Dorsolateral prefrontal cortex (tissue), 120 donors: ENCODE measurements at regions of chr21 and their contacts with region 1.

Region 1: DNA sequence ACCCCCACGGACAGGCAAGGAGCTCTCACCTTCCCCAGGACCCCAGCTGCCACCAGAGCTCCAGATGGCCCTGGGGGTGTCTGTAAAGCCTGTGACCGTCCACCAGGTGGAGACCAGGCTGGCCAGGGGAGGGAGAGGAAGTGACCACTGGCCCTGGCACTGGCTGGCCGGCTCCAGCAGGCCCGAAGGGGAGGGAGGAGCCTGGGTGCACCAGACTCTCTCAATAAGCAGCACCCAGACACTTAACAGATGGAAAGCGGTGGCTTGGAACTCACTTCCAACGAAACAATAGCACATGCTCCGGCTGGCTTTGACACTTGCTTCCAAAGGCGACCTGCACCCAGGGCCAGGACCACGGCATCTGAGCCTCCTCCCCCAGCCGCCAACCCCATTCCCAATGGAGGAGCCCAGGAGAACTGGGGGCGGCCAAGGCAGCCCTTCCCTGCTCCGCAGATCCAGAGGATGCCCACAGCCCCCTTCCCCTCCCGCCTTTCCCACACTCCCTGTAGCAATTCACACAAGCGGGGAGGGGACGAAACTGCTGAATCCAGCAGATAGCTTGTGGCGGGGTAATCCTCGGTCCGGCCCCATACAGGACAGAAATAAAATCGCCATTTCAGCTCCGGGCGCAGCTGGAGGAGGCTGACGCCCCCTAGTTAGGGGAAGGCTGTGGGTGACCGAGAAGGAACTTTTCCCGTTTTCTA is 742 bp upstream of the PDE9A start:
- DNase-seq: peak; percentile 52 to 84 (median 66)
- H3K4me3 ChIP-seq: peak overlapping the region; percentile 31 to 81 (median 59)
- H3K27ac ChIP-seq: peak overlapping the region in 58 of 59 donors; percentile 20 to 92 (median 80)
- H3K27me3 ChIP-seq: peaks cover 0 to 41% (median 3%) of the 10 kb centered on the region in 45 donors
- CTCF ChIP-seq: peak in 53 of 56 donors; percentile 8 to 73 (median 53)

Region 2: GRCh38 chr21:42289926-42290325 is 362.8 kb before region 1 on chr21:
- intact Hi-C with region 1: no loop called
- DNase-seq: peak in 4 of 10 donors; percentile 36 to 57 (median 48)
- H3K4me3 ChIP-seq: no peak overlapping the region
- H3K27ac ChIP-seq: peak overlapping the region in 2 of 59 donors; percentile 3 to 21
- H3K27me3 ChIP-seq: no peaks in the 10 kb centered on the region
- CTCF ChIP-seq: no peak

Region 3: GRCh38 chr21:42593007-42593806 is 59.5 kb before region 1 on chr21:
- intact Hi-C with region 1: loop called in 1 of 2 experiments (anchors 5 kb)
- DNase-seq: peak in 9 of 10 donors; percentile 60 to 83 (median 73)
- H3K4me3 ChIP-seq: peak overlapping the region in 38 of 59 donors; percentile 0 to 48 (median 26)
- H3K27ac ChIP-seq: no peak overlapping the region
- H3K27me3 ChIP-seq: no peaks in the 10 kb centered on the region
- CTCF ChIP-seq: peak; percentile 43 to 90 (median 80)

Region 4: GRCh38 chr21:42737951-42738590 is 85.4 kb after region 1 on chr21:
- intact Hi-C with region 1: loop called (anchors 10 kb)
- DNase-seq: peak in 3 of 10 donors; percentile 23 to 48 (median 42)
- H3K4me3 ChIP-seq: no peak overlapping the region
- H3K27ac ChIP-seq: peak overlapping the region in 56 of 59 donors; percentile 8 to 88 (median 70)
- H3K27me3 ChIP-seq: peaks cover 0 to 5% (median 0%) of the 10 kb centered on the region in 45 donors
- CTCF ChIP-seq: no peak

Region 5: GRCh38 chr21:42746593-42747275 is 94.1 kb after region 1 on chr21:
- intact Hi-C with region 1: loop called in 1 of 2 experiments (anchors 10 kb)
- DNase-seq: peak in 3 of 10 donors; percentile 32 to 34 (median 32)
- H3K4me3 ChIP-seq: peak overlapping the region in 1 of 59 donors; percentile 3
- H3K27ac ChIP-seq: peak overlapping the region in 48 of 59 donors; percentile 15 to 82 (median 66)
- H3K27me3 ChIP-seq: no peaks in the 10 kb centered on the region
- CTCF ChIP-seq: no peak

Region 6: DNA sequence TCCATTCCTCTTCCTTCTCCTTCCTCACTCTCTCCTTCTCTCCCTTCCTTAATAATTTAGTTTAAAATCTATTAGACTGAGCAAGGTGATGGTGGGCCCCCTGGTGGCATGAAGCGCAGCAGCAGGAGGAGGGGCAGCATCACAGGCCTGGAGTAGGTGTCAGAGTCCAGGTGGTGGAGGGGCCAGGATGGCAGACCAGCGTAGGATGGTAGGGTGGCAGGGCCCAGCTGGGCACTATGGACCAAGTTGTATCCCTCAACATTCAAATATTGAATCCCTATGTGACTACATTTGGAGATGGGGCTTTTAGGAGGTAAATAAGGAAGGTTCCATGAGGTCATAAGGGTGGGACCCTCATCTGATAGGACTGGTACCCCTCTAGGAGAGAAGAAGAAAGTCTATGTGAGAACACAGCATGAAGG is 165.7 kb after region 1 on chr21:
- intact Hi-C with region 1: loop called in 1 of 2 experiments (anchors 10 kb)
- DNase-seq: peak in 4 of 10 donors; percentile 28 to 63 (median 56)
- H3K4me3 ChIP-seq: no peak overlapping the region
- H3K27ac ChIP-seq: no peak overlapping the region
- H3K27me3 ChIP-seq: peaks cover 0 to 34% (median 0%) of the 10 kb centered on the region in 45 donors
- CTCF ChIP-seq: peak; percentile 31 to 86 (median 75)

Region 7: DNA sequence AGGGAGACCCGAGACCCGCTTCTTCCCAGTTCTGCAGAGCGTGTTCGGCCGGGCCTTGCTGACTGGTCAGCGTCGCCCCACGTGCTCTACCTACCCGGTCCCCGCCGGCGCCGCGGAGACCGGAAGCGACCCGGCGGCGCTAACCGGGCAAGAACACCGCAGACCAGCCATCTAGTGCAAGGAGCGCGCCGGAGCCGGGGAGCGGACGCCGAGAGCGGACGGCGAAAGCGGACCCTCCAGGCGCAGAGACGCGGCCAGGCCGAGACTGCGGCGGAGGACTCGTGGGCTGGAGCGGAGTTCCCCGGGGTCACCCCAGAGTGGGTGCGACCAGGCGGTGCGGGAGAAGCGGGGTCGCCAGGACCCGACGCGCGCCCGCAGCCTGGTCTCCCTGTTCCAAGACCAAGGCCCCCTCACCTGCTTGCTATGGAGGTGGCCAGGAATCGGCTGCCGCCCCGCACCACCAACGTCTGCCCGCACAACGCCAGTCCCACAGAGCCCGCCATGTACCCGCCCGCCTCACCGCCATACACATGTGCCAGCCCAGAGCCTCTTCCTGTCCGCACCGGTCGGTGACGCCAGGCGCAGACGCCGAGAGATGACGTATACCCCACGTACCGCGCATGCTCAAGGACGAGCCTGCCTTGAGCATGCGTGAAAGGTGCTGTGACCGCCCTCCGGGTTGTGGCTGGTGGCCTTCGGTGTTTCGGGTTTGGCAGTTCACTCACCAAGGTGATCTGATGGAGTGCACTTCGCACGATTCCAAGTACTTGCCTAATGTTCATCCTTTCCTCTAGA is 226.5 kb after region 1 on chr21 and contains the start of gene WDR4:
- intact Hi-C with region 1: loop called in 1 of 2 experiments (anchors 5 kb)
- DNase-seq: peak; percentile 89 to 95 (median 92)
- H3K4me3 ChIP-seq: peak within 1 kb of the TSS; percentile 63 to 100 (median 96)
- H3K27ac ChIP-seq: peak within 1 kb of the TSS in 53 of 59 donors; percentile 43 to 95 (median 81)
- H3K27me3 ChIP-seq: no peaks in the 10 kb centered on the region
- CTCF ChIP-seq: peak in 27 of 56 donors; percentile 5 to 60 (median 24)
- total RNA-seq, gene WDR4: 10.5 to 26.1 (median 16.4) TPM